ENCODE measurements at regions of chr9 and their contacts with region 1.

Region 1: GRCh38 chr9:1429297-1429696 is 379.1 kb downstream of the DMRT2 start:
- DNase-seq: peak in 2 of 3 donors; percentile 20 to 59
- ATAC-seq: peak in 1 of 2 donors; percentile 63
- H3K4me3 ChIP-seq: no peak overlapping the region
- H3K27ac ChIP-seq: no peak overlapping the region
- H3K4me1 ChIP-seq: no peaks in the 10 kb centered on the region
- H3K27me3 ChIP-seq: no peaks in the 10 kb centered on the region

Region 2: DNA sequence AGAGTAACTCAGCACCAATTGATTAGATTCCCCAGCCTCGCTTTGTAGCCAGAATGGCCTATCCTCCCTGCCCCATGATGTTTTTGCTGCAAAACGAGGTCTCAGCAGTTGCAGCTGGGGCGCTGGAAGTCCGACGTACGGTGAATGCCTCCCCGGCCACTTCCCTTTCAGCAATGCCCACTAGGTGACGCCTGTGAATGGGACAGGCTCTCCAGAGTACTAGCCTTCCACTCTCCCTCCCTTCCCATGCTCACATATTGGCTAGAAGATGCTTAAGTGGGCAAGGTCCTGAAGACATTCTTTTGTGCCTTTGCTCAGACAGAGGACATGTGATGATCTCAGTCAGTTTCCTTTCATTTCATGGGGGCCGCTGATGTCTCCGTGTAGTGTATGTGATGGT is 328.4 kb before region 1 on chr9:
- intact Hi-C with region 1: loop called in 2 of 4 experiments (anchors 10 kb)
- DNase-seq: peak; percentile 36 to 83 (median 77)
- ATAC-seq: peak; percentile 74 to 90
- H3K4me3 ChIP-seq: no peak overlapping the region
- H3K27ac ChIP-seq: no peak overlapping the region
- H3K4me1 ChIP-seq: no peaks in the 10 kb centered on the region
- H3K27me3 ChIP-seq: no peaks in the 10 kb centered on the region

Measured in right cardiac atrium (tissue), 5 donors.